H1 (cell line): ENCODE measurements at regions of chr20 and their contacts with region 1.

Region 1: GRCh38 chr20:53547664-53548239 is 45.9 kb downstream of the ZNF217 start:
- DNase-seq: peak; percentile 9 to 56
- H3K4me3 ChIP-seq: no peak overlapping the region
- H3K27ac ChIP-seq: no peak overlapping the region
- H3K4me1 ChIP-seq: no peaks in the 10 kb centered on the region; a peak in 2 of 7 replicates
- H3K27me3 ChIP-seq: no peaks in the 10 kb centered on the region
- CTCF ChIP-seq: peak in 2 of 3 experiments; percentile 81 to 86; a peak in 3 of 4 replicates
- EP300 ChIP-seq: no peak
- POLR2A ChIP-seq: no peak
- RAD21 ChIP-seq: peak; percentile 98 to 99

Region 2: DNA sequence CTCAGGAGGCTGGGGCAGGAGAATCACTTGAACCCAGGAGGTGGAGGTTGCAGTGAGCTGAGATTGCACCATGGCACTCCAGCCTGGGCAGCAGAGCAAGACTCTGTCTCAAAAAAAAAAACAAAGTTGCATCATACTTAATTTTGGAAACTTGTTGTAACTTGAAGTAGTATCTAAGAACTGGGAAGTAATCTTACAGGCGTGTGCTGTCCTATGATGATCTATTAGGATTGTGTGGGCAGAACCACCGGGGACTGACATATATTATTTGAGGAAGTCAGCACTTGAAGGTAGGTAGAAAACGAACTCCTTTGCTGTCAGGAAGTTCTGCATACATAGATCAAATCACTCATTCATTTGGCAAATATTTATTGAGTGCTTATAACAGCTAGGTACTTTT is 142.6 kb before region 1 on chr20:
- CTCF ChIA-PET with region 1: interaction called, 30 read pairs
- POLR2A ChIA-PET with region 1: no interaction called
- DNase-seq: no peak
- H3K4me3 ChIP-seq: no peak overlapping the region
- H3K27ac ChIP-seq: no peak overlapping the region
- H3K4me1 ChIP-seq: no peaks in the 10 kb centered on the region
- H3K27me3 ChIP-seq: no peaks in the 10 kb centered on the region
- CTCF ChIP-seq: no peak
- EP300 ChIP-seq: no peak
- POLR2A ChIP-seq: no peak
- RAD21 ChIP-seq: no peak

Region 3: DNA sequence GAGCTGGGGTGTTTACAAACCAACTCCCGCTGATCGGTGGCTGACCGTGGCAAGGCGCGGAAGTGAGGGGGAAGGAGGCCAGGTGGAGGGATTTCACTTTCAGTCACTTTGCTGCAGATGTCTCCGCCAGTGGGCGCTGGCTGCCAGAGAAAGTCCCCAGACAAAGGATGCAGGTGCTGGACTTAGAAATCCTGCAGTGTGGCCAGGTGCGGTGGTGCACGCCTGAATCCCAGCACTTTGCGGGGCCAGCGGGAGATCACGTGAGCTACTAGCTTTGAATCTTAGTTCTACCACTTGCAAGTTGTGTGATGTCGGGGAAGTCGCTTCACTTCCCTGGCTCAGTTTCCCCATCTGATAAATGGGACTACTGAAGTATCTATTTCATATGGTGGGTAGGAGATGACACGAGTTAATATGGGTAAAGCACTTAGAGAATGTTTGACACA is 134.5 kb before region 1 on chr20:
- CTCF ChIA-PET with region 1: interaction called, 30 read pairs
- POLR2A ChIA-PET with region 1: no interaction called
- DNase-seq: peak; percentile 73 to 86
- H3K4me3 ChIP-seq: peak overlapping the region in 1 of 4 experiments; percentile 42; a peak in 3 of 8 replicates
- H3K27ac ChIP-seq: no peak overlapping the region
- H3K4me1 ChIP-seq: peaks cover 0 to 7% (median 4%) of the 10 kb centered on the region in 4 experiments; a peak in 5 of 7 replicates
- H3K27me3 ChIP-seq: no peaks in the 10 kb centered on the region
- CTCF ChIP-seq: peak; percentile 69 to 98 (median 95)
- EP300 ChIP-seq: peak in 1 of 2 experiments; percentile 58; a peak in 1 of 3 replicates
- POLR2A ChIP-seq: no peak
- RAD21 ChIP-seq: peak; percentile 90 to 91

Region 4: GRCh38 chr20:53570521-53571357 is 23.0 kb after region 1 on chr20:
- CTCF ChIA-PET with region 1: no interaction called
- POLR2A ChIA-PET with region 1: no interaction called
- DNase-seq: no peak
- H3K4me3 ChIP-seq: no peak overlapping the region
- H3K27ac ChIP-seq: no peak overlapping the region
- H3K4me1 ChIP-seq: no peaks in the 10 kb centered on the region
- H3K27me3 ChIP-seq: no peaks in the 10 kb centered on the region
- CTCF ChIP-seq: no peak
- EP300 ChIP-seq: no peak
- POLR2A ChIP-seq: no peak
- RAD21 ChIP-seq: no peak